Tibial artery (tissue), 4 donors: ENCODE measurements at regions of chr7 and their contacts with region 1.

Region 1: GRCh38 chr7:20598459-20599309 is 16.8 kb upstream of the ABCB5 start:
- DNase-seq: no peak
- H3K4me3 ChIP-seq: peak overlapping the region; percentile 26 to 36
- H3K27ac ChIP-seq: peak overlapping the region in 1 of 2 donors; percentile 34
- H3K4me1 ChIP-seq: no peaks in the 10 kb centered on the region
- H3K27me3 ChIP-seq: peaks cover 0 to 2% of the 10 kb centered on the region in 2 donors
- CTCF ChIP-seq: peak; percentile 78 to 83

Region 2: GRCh38 chr7:19754521-19755116 is 844.1 kb before region 1 on chr7:
- intact Hi-C with region 1: loop called (anchors 10 kb)
- DNase-seq: no peak
- H3K4me3 ChIP-seq: no peak overlapping the region
- H3K27ac ChIP-seq: no peak overlapping the region
- H3K4me1 ChIP-seq: no peaks in the 10 kb centered on the region
- H3K27me3 ChIP-seq: no peaks in the 10 kb centered on the region
- CTCF ChIP-seq: peak; percentile 43 to 58

Region 3: DNA sequence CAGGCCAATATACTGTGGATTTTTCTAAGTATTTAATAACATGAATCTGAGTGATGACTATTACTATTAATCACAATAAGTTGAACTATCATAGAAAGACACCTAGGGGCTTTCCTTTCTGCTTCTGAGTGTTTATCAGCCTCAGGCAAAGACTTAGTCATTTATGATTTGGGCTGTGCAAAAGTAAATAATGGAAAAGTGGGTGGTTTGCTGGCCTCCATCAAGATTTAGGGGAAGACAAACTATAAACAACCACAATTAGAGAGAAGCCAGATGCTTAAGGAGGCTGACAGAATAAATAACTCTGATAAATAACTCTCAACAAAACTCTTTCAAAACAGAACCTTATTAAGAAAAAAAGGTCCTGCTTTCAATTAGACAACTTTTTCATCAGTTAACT is 446.2 kb before region 1 on chr7:
- intact Hi-C with region 1: no loop called
- DNase-seq: no peak
- H3K4me3 ChIP-seq: no peak overlapping the region
- H3K27ac ChIP-seq: no peak overlapping the region
- H3K4me1 ChIP-seq: no peaks in the 10 kb centered on the region
- H3K27me3 ChIP-seq: no peaks in the 10 kb centered on the region
- CTCF ChIP-seq: no peak

Region 4: DNA sequence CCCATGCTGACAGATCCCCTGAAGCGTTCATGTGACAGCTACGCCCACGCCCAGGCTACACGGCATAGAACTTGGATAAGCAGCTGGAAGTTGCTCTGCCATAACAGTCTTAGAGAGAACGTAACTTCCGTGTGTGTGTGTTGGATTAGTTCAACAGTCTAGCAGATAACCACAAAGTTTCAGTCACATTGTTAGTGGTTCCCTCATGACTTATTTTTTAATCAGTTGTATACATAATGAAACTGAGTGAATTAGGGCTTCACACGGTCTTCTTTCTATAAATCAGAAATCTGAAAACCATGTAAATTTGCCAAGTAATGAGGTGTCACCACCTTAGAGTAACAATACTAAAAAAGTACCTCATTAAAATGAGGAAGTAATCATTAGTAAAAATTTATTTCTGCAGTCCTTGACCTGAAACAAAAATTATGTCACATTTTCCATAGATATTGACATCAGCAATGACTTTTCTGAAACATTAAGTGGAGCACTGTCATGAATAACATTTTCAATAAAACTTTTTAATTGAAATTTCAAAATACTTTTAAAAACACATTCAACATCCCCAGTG is 359.8 kb before region 1 on chr7:
- intact Hi-C with region 1: no loop called
- DNase-seq: no peak
- H3K4me3 ChIP-seq: no peak overlapping the region
- H3K27ac ChIP-seq: no peak overlapping the region
- H3K4me1 ChIP-seq: no peaks in the 10 kb centered on the region
- H3K27me3 ChIP-seq: no peaks in the 10 kb centered on the region
- CTCF ChIP-seq: no peak

Region 5: DNA sequence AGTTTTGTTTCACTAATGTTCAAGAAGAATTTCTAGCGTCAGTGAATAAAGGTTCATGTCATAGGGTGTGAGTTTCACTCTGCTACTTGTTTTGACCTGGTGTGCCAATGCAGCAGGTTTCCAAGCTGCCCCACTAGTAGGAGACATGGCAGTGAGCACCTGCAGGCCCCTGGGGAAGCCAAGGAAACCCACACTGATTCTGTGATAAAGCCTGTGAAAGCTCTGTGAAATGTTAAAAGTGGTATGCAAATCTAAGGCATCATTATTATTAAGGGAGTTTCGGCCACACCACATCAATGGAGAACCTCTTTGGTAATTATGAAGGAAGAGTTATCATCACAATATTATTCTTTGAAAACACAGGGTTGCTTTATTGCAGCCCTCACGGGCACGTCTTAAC is 63.2 kb after region 1 on chr7:
- intact Hi-C with region 1: no loop called
- DNase-seq: no peak
- H3K4me3 ChIP-seq: no peak overlapping the region
- H3K27ac ChIP-seq: no peak overlapping the region
- H3K4me1 ChIP-seq: no peaks in the 10 kb centered on the region
- H3K27me3 ChIP-seq: no peaks in the 10 kb centered on the region
- CTCF ChIP-seq: no peak

Region 6: DNA sequence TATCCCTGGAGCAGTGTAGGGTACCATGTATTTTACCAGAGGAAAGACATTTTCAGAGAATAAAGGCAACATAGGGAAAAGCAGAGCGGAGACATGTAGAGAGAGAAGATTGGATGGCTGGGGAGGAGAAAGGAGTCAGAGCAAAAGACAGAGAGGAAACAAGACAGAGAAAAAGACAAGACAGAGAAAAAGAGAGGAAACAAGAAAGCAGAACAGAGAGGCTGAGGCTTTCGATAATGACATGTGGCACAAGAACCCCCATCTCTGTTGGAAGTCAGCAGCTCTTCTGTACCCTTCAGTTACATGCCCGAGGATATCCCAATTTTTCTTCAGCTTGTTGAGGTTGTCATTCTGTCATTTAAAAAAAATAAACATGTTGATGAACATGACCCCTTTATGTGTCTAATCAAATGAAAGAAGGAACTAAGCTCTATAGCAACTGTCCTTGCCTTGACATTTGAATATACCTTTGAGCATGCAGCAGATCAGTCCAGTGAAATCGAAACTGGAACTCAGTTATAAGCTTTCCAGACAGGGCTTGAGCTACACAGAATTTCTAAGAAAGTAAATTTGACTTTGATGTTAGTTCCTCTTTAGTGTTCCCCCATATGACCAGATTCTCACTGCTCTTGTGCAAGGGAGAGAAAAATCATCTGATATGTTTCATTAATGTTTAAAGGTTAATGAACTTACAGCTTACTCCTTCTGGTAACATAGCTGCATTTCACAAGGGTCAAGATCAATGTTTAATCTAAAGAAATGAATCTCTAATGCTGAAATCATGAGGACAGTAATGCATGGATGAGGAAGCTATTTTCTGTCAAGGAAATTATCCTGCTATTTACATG is 754.1 kb after region 1 on chr7:
- intact Hi-C with region 1: no loop called
- DNase-seq: no peak
- H3K4me3 ChIP-seq: no peak overlapping the region
- H3K27ac ChIP-seq: no peak overlapping the region
- H3K4me1 ChIP-seq: no peaks in the 10 kb centered on the region
- H3K27me3 ChIP-seq: peaks cover 0 to 2% of the 10 kb centered on the region in 2 donors
- CTCF ChIP-seq: no peak